Activated CD4-positive, alpha-beta T cell treated with anti-CD3 and anti-CD28 coated beads for 36 hours (primary cell): ENCODE measurements at regions of chr21 and their contacts with region 1.

Region 1: GRCh38 chr21:31397515-31397926 is 53.5 kb upstream of the TIAM1 start:
- DNase-seq: no peak
- ATAC-seq: no peak
- H3K4me3 Mint-ChIP-seq: no peak overlapping the region
- H3K27ac Mint-ChIP-seq: no peak overlapping the region
- H3K4me1 Mint-ChIP-seq: peaks cover 38% of the 10 kb centered on the region
- H3K27me3 Mint-ChIP-seq: no peaks in the 10 kb centered on the region

Region 2: GRCh38 chr21:31363720-31364119 is 33.8 kb before region 1 on chr21:
- CTCF ChIA-PET with region 1: no interaction called
- POLR2A ChIA-PET with region 1: no interaction called
- intact Hi-C with region 1: loop called in 1 of 2 experiments (anchors 5 kb)
- DNase-seq: no peak
- ATAC-seq: peak; percentile 29
- H3K4me3 Mint-ChIP-seq: peak overlapping the region; percentile 1
- H3K27ac Mint-ChIP-seq: peak overlapping the region; percentile 37
- H3K4me1 Mint-ChIP-seq: peaks cover 50% of the 10 kb centered on the region
- H3K27me3 Mint-ChIP-seq: no peaks in the 10 kb centered on the region

Region 3: GRCh38 chr21:31509194-31510017 is 111.9 kb after region 1 on chr21:
- CTCF ChIA-PET with region 1: no interaction called
- POLR2A ChIA-PET with region 1: no interaction called
- intact Hi-C with region 1: no loop called
- DNase-seq: peak; percentile 93
- ATAC-seq: peak; percentile 91
- H3K4me3 Mint-ChIP-seq: peak overlapping the region; percentile 49
- H3K27ac Mint-ChIP-seq: peak overlapping the region; percentile 78
- H3K4me1 Mint-ChIP-seq: peaks cover 34% of the 10 kb centered on the region
- H3K27me3 Mint-ChIP-seq: peaks cover 2% of the 10 kb centered on the region